A549 (cell line): ENCODE measurements at regions of chr2 and their contacts with region 1.

Region 1: DNA sequence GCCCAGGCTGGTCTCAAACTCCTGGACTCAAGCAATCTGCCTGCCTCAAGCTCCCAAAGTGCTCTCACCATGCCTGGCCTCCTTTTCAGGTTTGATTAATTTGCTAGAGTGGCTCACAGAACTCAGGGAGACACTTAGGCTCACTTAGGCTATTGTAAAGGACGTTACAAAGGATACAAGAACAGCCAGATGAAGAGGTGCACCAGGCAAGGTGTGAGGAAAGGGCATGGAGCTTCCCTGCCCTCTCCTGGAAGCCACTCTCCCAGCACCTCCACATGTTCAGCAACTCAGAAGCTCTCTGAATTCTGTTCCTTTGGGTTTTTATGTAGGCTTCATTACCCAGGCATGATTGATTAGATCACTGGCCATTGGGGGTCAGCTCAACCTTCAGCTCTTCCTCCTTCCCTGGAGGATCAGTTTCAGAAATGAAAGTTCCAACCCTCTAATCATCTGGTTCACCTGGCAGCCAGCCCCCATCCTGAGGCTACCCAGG is 78.7 kb upstream of the RGPD5 start:
- DNase-seq: peak in 1 of 2 experiments; percentile 48
- ATAC-seq: peak; percentile 68 to 88; a peak in 4 of 6 replicates
- H3K4me3 ChIP-seq: no peak overlapping the region
- H3K27ac ChIP-seq: no peak overlapping the region
- H3K4me1 ChIP-seq: no peaks in the 10 kb centered on the region
- CTCF ChIP-seq: peak; percentile 36; the same call in 2 of the 3 replicates
- EP300 ChIP-seq: no peak
- POLR2A ChIP-seq: no peak
- RAD21 ChIP-seq: peak; percentile 57 to 61

Region 2: GRCh38 chr2:109486711-109487535 is 228.4 kb before region 1 on chr2:
- CTCF ChIA-PET with region 1: no interaction called
- POLR2A ChIA-PET with region 1: no interaction called
- DNase-seq: peak in 1 of 2 experiments; percentile 22
- ATAC-seq: peak in 1 of 2 experiments; percentile 63; a peak in 3 of 6 replicates
- H3K4me3 ChIP-seq: no peak overlapping the region
- H3K27ac ChIP-seq: no peak overlapping the region
- H3K4me1 ChIP-seq: 0 out of 3 replicates have a peak, but pooled peaks cover 4% of the 10 kb centered on the region
- CTCF ChIP-seq: no peak
- EP300 ChIP-seq: no peak
- POLR2A ChIP-seq: no peak
- RAD21 ChIP-seq: no peak

Region 3: GRCh38 chr2:109613922-109614714 is 101.2 kb before region 1 on chr2 and contains the starts of genes SEPTIN10 and SOWAHC:
- CTCF ChIA-PET with region 1: interaction called, 10 read pairs
- POLR2A ChIA-PET with region 1: no interaction called
- DNase-seq: peak; percentile 63 to 99
- ATAC-seq: peak; percentile 90 to 95
- H3K4me3 ChIP-seq: peak within 1 kb of the TSS; percentile 69
- H3K27ac ChIP-seq: peak within 1 kb of the TSS; percentile 92 to 99
- H3K4me1 ChIP-seq: peaks cover 47% of the 10 kb centered on the region; the same call in 2 of the 3 replicates
- CTCF ChIP-seq: no peak
- EP300 ChIP-seq: no peak
- POLR2A ChIP-seq: peak; percentile 89
- RAD21 ChIP-seq: 0 out of 5 replicates have a peak, but pooled peaks of 1 of the 2 experiments have one; percentile 18
- polyA plus RNA-seq, gene SEPTIN10: 76.9 and 87.6 TPM in 2 replicates
- polyA plus RNA-seq, gene SOWAHC: 9.9 and 13.7 TPM in 2 replicates